Naive thymus-derived CD4-positive, alpha-beta T cell (primary cell): ENCODE measurements at regions of chr1 and their contacts with region 1.

Region 1: GRCh38 chr1:41802532-41803501 is 115.9 kb downstream of the HIVEP3 start:
- DNase-seq: peak in 7 of 9 donors; percentile 26 to 51 (median 48)
- ATAC-seq: peak; percentile 85
- H3K4me3 ChIP-seq: peak overlapping the region; percentile 32
- H3K4me3 Mint-ChIP-seq: peak overlapping the region; percentile 6 to 77 (median 62)
- H3K27ac ChIP-seq: peak overlapping the region; percentile 7
- H3K27ac Mint-ChIP-seq: peak overlapping the region; percentile 54 to 92 (median 87)
- H3K4me1 ChIP-seq: peaks cover 50 to 82% of the 10 kb centered on the region in 2 donors
- H3K4me1 Mint-ChIP-seq: peaks cover 59 to 84% (median 73%) of the 10 kb centered on the region in 7 donors
- H3K27me3 ChIP-seq: no peaks in the 10 kb centered on the region
- H3K27me3 Mint-ChIP-seq: no peaks in the 10 kb centered on the region

Region 2: DNA sequence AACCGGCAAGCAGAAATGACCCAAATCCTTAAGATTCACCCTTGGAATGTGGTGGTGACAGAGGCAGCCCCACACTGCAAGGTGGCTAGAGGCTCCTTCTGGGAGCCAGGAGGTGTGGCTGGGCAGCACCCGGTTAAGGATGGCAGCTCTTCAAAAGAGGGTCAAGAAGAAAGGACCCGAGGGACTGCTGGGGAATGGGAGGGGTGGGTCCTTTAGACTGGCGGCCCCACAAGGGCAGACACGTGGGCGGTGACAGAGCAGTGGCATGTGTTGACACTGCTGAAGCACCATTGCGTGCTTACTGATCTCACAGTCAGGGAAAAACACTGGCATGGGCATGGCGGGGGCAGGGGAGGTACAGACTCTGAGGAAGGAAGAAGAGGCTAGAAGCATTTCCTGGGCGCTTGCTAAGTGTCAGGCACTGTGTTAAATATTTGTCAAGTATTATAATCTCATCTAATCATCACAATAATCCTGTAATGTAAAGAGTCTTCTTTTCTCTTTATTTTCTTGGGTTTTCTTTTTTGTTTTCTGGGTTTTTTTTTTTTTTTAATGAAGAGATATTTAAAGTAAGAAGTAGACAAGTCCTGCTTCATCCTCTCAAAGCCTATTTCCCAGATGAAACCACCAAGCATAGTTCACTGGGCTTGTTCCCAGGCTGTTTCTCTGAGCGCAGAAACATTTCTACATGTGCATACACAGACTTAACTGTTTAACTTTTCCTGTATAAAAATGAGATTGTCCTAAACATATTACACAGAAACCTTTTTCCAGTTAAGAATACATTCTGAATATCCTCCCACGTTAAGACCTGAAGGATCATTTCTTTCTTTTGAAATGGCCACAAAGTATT is 152.6 kb before region 1 on chr1:
- CTCF ChIA-PET with region 1: no interaction called
- POLR2A ChIA-PET with region 1: no interaction called
- intact Hi-C with region 1: no loop called
- DNase-seq: no peak
- ATAC-seq: peak; percentile 41
- H3K4me3 ChIP-seq: no peak overlapping the region
- H3K4me3 Mint-ChIP-seq: peak overlapping the region in 4 of 10 donors; percentile 26 to 50 (median 35)
- H3K27ac ChIP-seq: no peak overlapping the region
- H3K27ac Mint-ChIP-seq: peak overlapping the region in 5 of 9 donors; percentile 18 to 88 (median 50)
- H3K4me1 ChIP-seq: peaks cover 3 to 10% of the 10 kb centered on the region in 2 donors
- H3K4me1 Mint-ChIP-seq: peaks cover 17 to 66% (median 30%) of the 10 kb centered on the region in 7 donors
- H3K27me3 ChIP-seq: no peaks in the 10 kb centered on the region
- H3K27me3 Mint-ChIP-seq: no peaks in the 10 kb centered on the region

Region 3: DNA sequence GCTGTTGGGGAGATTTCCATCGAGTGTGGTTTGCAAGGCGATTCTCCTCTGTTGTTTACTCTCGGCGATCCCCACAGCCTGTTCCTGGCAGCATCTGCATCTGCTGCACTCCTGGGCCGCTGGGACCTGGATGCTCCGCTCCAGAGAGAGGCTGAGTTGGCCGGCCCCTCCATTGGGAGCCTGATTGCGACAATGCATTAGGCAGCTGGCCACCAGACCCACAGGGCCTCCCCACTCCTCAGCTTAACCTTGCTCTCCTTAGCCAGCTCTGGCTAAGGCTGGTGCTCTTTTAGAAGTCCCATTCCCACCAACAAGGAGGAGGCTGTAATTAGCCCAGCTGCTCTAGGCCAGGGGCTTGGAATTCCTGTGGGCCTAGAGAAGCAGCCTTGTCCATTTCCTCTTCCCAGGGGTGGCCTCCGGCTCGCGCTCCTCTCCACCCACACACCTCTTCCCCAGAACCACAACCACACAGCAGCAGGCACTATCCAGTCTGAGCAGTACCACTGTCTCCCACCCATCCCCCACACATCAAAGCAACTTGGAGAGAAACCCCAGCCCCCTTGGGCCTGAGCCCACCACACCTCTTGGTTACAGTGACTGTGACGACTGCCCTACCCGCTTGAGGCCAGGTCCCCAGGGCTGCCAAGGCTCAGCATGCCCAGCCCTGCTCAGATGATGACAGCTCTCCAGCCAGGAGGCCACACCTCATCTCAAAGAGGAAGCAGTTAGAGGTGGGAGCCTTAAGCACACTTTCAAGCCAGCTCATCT is 124.5 kb before region 1 on chr1:
- CTCF ChIA-PET with region 1: no interaction called
- POLR2A ChIA-PET with region 1: no interaction called
- intact Hi-C with region 1: loop called in 1 of 2 experiments (anchors 5 kb)
- DNase-seq: no peak
- ATAC-seq: peak; percentile 46
- H3K4me3 ChIP-seq: no peak overlapping the region
- H3K4me3 Mint-ChIP-seq: peak overlapping the region in 2 of 10 donors; percentile 43 to 76
- H3K27ac ChIP-seq: no peak overlapping the region
- H3K27ac Mint-ChIP-seq: peak overlapping the region in 1 of 9 donors; percentile 90
- H3K4me1 ChIP-seq: peaks cover 40 to 49% of the 10 kb centered on the region in 2 donors
- H3K4me1 Mint-ChIP-seq: peaks cover 30 to 92% (median 58%) of the 10 kb centered on the region in 7 donors
- H3K27me3 ChIP-seq: no peaks in the 10 kb centered on the region
- H3K27me3 Mint-ChIP-seq: no peaks in the 10 kb centered on the region

Region 4: DNA sequence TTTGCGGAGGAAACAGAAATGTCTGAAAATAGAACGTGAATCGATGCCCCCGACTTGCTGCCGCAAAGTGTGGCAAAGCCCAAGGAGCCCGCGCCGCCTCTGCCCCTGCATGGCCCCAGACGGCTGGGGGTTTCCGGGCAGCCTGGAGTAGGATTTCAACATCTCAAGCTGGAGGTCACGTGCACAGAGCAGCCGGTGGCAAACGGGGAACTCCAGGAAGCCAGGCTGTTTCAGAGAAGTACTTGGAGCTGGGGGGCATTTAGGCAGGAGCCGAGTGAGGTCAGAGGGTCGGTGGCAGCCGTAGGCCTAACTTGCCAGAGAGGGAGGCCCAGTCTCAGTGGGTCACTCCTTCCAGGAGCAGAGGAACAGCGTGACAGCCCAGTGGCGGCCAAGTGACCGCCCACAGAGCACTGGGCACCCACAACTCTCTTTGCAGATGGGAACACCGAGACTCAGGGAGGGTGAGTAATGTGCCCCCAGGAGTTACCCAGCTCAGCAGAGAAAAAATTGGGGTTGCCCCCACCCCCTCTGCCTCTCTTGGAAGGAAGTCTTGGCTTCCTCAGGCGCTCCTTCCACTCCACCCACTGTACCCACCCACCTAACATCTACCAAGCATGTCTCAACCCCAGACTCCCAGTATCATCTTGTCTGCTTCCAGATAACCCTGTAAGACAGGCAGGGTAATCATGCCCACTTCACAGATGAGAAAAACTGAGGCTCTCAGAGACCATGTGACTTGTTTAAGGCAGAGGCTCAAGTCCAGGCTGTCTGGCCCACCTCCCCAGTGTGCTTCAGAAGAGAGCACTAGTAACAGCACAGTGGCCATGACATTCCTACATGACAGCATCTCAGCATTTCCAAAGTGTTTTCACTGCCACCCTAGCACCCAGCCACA is 63.5 kb before region 1 on chr1:
- CTCF ChIA-PET with region 1: no interaction called
- POLR2A ChIA-PET with region 1: no interaction called
- intact Hi-C with region 1: loop called in 1 of 2 experiments (anchors 2 kb)
- DNase-seq: peak; percentile 10 to 83 (median 36)
- ATAC-seq: peak; percentile 87
- H3K4me3 ChIP-seq: peak overlapping the region; percentile 45
- H3K4me3 Mint-ChIP-seq: peak overlapping the region; percentile 68 to 83 (median 76)
- H3K27ac ChIP-seq: no peak overlapping the region
- H3K27ac Mint-ChIP-seq: peak overlapping the region in 6 of 9 donors; percentile 29 to 94 (median 59)
- H3K4me1 ChIP-seq: peaks cover 23 to 31% of the 10 kb centered on the region in 2 donors
- H3K4me1 Mint-ChIP-seq: peaks cover 23 to 83% (median 39%) of the 10 kb centered on the region in 7 donors
- H3K27me3 ChIP-seq: no peaks in the 10 kb centered on the region
- H3K27me3 Mint-ChIP-seq: no peaks in the 10 kb centered on the region